ENCODE measurements at regions of chr12 and their contacts with region 1.

Region 1: GRCh38 chr12:111405149-111405860 is 418 bp upstream of the SH2B3 start:
- DNase-seq: peak; percentile 98
- H3K4me3 ChIP-seq: peak overlapping the region; percentile 93
- H3K27ac ChIP-seq: peak overlapping the region; percentile 84
- H3K4me1 ChIP-seq: peaks cover 57% of the 10 kb centered on the region
- CTCF ChIP-seq: peak; percentile 74

Region 2: GRCh38 chr12:111444925-111445725 is 39.8 kb after region 1 on chr12:
- CTCF ChIA-PET with region 1: interaction called, 22 read pairs
- POLR2A ChIA-PET with region 1: interaction called, 16 read pairs
- intact Hi-C with region 1: loop called (anchors 1 kb)
- DNase-seq: peak; percentile 93
- H3K4me3 ChIP-seq: peak overlapping the region; percentile 42
- H3K27ac ChIP-seq: peak overlapping the region; percentile 91
- H3K4me1 ChIP-seq: peaks cover 67% of the 10 kb centered on the region
- CTCF ChIP-seq: no peak

Region 3: DNA sequence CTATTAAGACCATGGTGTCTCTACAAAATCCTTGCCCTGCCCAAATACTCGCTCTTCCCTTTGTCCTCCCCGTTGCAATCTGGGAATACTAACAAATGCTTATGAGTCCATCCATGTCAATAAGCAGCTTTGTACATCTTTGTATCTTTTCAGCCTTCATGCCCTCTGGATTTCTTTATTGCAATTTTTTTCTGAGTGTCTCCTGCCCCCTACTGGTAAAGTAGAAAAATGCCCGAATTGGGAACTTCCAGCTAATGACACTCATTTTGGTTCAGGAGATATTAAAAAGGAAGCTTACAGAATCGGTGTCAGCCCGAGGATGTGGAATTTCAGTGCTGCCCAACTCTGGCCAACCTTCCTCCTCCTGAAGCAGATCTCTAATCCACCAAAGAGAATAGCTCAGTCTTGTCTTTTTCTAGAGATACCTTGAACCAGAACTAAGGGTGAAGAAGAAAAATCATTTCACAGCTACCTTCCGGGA is 46.4 kb after region 1 on chr12:
- CTCF ChIA-PET with region 1: interaction called, 22 read pairs
- POLR2A ChIA-PET with region 1: interaction called, 11 read pairs
- intact Hi-C with region 1: loop called (anchors 1 kb)
- DNase-seq: peak; percentile 68
- H3K4me3 ChIP-seq: no peak overlapping the region
- H3K27ac ChIP-seq: no peak overlapping the region
- H3K4me1 ChIP-seq: peaks cover 26% of the 10 kb centered on the region
- CTCF ChIP-seq: peak; percentile 99

Region 4: GRCh38 chr12:111599459-111600204 is 194.3 kb after region 1 on chr12:
- CTCF ChIA-PET with region 1: no interaction called
- POLR2A ChIA-PET with region 1: no interaction called
- intact Hi-C with region 1: loop called (anchors 5 kb)
- DNase-seq: peak; percentile 95
- H3K4me3 ChIP-seq: peak overlapping the region; percentile 97
- H3K27ac ChIP-seq: peak overlapping the region; percentile 77
- H3K4me1 ChIP-seq: peaks cover 27% of the 10 kb centered on the region
- CTCF ChIP-seq: no peak

Region 5: DNA sequence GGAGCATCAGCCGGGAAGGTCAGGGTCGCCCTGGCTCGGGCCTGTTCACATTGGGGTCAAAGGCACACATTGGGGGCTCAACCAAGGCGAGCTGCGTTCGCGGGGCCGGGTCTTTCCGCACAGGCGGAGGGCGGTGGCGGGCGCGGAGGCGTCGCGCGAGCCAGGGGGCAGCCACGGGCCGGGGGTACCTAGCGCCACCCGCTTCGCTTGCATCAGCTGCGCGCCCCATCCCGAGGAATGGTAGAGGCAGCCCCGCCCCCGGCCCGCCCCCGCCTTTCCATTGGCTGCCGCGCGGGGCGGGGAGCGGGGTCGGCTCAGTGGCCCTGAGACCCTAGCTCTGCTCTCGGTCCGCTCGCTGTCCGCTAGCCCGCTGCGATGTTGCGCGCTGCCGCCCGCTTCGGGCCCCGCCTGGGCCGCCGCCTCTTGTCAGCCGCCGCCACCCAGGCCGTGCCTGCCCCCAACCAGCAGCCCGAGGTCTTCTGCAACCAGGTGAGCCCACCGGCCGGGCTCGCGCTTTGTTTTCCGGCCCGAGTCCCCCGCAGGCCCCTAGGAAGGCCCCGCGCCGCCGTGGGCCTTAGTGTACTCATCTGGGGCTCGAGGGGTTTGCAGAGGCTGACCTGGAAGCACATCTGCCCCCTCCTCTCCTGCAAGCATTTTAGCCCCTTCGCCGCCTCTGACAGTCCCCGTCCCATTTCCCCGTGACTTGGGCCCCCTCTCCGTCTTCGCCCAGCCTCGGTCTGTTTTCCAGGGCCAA is 361.5 kb after region 1 on chr12 and contains the start of gene ALDH2:
- CTCF ChIA-PET with region 1: no interaction called
- POLR2A ChIA-PET with region 1: no interaction called
- intact Hi-C with region 1: loop called (anchors 10 kb)
- DNase-seq: peak; percentile 69
- H3K4me3 ChIP-seq: peak within 1 kb of the TSS; percentile 64
- H3K27ac ChIP-seq: peak within 1 kb of the TSS; percentile 88
- H3K4me1 ChIP-seq: peaks cover 60% of the 10 kb centered on the region
- CTCF ChIP-seq: no peak
- total RNA-seq, gene ALDH2: 16.8 and 19.9 TPM in 2 replicates